Activated naive CD8-positive, alpha-beta T cell treated with anti-CD3 and anti-CD28 coated beads, Interleukin-2, amount 10 ng/mL, durations not matched to agents 7 days and 5 days (primary cell): ENCODE measurements at regions of chr7 and their contacts with region 1.

Region 1: GRCh38 chr7:156949541-156950380 is at the start of gene NOM1:
- DNase-seq: peak; percentile 97
- ATAC-seq: peak; percentile 92
- H3K4me3 Mint-ChIP-seq: peak within 1 kb of the TSS; percentile 87
- H3K27ac Mint-ChIP-seq: peak within 1 kb of the TSS; percentile 82
- H3K4me1 Mint-ChIP-seq: peaks cover 24% of the 10 kb centered on the region
- H3K27me3 Mint-ChIP-seq: peaks cover 14% of the 10 kb centered on the region
- total RNA-seq, gene NOM1: 27.2 to 29.8 TPM

Region 2: GRCh38 chr7:156927571-156928405 is 22.0 kb before region 1 on chr7:
- POLR2A ChIA-PET with region 1: interaction called, 16 read pairs
- DNase-seq: no peak
- ATAC-seq: no peak
- H3K4me3 Mint-ChIP-seq: no peak overlapping the region
- H3K27ac Mint-ChIP-seq: no peak overlapping the region
- H3K4me1 Mint-ChIP-seq: peaks cover 28% of the 10 kb centered on the region
- H3K27me3 Mint-ChIP-seq: peaks cover 70% of the 10 kb centered on the region